ENCODE measurements at regions of chr2 and their contacts with region 1.

Region 1: DNA sequence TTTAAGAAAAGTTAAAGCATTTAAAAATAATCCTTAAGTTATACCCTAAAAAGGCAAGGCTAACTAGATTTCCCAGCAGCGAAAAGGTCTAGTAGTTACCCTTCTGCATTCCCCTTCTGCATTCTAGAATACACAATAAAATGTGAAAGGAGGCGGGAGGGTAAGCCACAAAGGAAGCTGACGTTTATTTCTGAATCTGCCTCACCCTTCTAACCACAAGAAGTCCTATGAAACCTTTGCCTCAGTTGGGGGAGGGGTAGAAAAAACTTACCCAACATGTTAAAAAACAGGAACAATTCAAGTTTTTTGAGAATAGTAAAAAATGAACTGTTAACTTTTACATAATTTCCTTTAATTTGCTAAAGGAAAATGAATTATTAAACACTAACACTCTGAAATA is 11.3 kb downstream of the STK17B start:
- DNase-seq: peak; percentile 69
- H3K4me3 Mint-ChIP-seq: peak overlapping the region; percentile 55
- H3K27ac Mint-ChIP-seq: peak overlapping the region; percentile 87
- H3K4me1 Mint-ChIP-seq: peaks cover 60% of the 10 kb centered on the region
- H3K27me3 Mint-ChIP-seq: no peaks in the 10 kb centered on the region

Region 2: DNA sequence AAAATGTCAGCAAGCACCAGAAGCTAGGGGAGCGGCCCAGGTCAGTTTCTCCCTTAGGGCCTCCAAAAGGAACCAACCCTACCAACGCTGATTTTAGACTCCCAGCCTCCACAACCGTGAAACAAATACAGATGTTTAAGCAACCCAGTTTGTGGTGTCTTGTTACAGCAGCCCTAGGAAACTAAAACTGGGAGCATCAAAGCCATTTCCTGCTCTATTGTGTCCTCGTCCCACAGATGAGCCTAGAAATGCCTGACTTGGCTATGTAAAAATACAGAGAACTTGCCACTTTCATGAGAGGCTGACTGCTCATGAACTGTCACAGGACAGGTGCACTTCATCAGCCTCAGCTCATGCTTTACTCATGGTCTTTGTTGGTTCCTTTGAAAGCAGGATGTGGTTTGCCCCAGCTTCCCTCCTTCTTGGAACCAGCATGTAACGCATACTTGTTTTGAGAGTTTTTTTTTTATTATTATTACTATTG is 600.6 kb before region 1 on chr2:
- intact Hi-C with region 1: loop called (anchors 5 kb)
- DNase-seq: peak; percentile 82
- H3K4me3 Mint-ChIP-seq: peak overlapping the region; percentile 56
- H3K27ac Mint-ChIP-seq: peak overlapping the region; percentile 90
- H3K4me1 Mint-ChIP-seq: peaks cover 57% of the 10 kb centered on the region
- H3K27me3 Mint-ChIP-seq: no peaks in the 10 kb centered on the region

Region 3: GRCh38 chr2:196171248-196171871 is 11.3 kb after region 1 on chr2 and contains the start of gene STK17B:
- intact Hi-C with region 1: loop called (anchors 1 kb)
- DNase-seq: peak; percentile 94
- H3K4me3 Mint-ChIP-seq: peak within 1 kb of the TSS; percentile 96
- H3K27ac Mint-ChIP-seq: peak within 1 kb of the TSS; percentile 93
- H3K4me1 Mint-ChIP-seq: peaks cover 44% of the 10 kb centered on the region
- H3K27me3 Mint-ChIP-seq: no peaks in the 10 kb centered on the region
- total RNA-seq, gene STK17B: 176 and 178 TPM in 2 replicates

Region 4: GRCh38 chr2:196205881-196206435 is 45.9 kb after region 1 on chr2:
- intact Hi-C with region 1: loop called (anchors 1 kb)
- DNase-seq: no peak
- H3K4me3 Mint-ChIP-seq: no peak overlapping the region
- H3K27ac Mint-ChIP-seq: no peak overlapping the region
- H3K4me1 Mint-ChIP-seq: peaks cover 41% of the 10 kb centered on the region
- H3K27me3 Mint-ChIP-seq: no peaks in the 10 kb centered on the region

Region 5: DNA sequence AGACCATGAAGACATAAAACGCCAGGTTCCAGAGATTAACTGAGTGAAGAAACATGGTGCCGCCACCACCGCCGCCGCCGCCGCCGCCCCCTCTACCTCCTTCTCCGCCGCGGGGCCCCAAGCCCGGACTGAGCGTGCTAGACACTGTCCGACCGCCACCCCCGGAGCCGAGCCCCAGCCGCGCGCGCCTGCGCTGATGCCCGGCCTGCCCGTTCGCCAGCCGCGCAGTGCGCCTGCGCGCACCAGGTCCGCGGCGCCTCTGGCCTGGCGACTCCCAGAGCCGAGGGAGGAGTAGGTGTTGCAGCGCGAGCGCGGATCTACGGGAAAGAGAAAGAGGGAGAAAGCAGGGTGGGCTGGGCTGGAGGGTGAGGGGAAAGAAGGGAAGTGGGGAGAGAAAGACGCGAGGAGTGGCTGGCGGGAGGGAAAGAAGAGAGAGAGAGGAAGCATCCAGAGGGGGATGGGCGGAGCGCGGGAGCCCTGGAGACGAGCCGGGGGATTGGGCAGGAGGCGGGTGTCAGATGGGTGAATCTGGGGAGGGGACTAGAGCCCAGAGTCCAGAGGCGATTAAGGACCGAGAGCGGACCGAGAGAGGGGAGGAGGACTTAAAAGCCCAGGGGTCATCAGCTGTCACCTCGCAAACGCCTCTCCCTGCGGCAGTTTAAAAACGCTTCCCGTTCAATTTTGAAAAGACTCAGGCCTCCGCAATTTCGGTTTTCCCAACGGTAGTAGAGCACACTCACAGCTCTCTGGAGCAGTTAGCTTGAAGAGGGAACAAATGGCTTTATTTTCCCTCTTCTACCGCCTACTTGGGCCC is 766.7 kb after region 1 on chr2 and contains the start of gene PGAP1:
- intact Hi-C with region 1: loop called (anchors 10 kb)
- DNase-seq: peak; percentile 84
- H3K4me3 Mint-ChIP-seq: peak within 1 kb of the TSS; percentile 100
- H3K27ac Mint-ChIP-seq: peak within 1 kb of the TSS; percentile 99
- H3K4me1 Mint-ChIP-seq: peaks cover 35% of the 10 kb centered on the region
- H3K27me3 Mint-ChIP-seq: no peaks in the 10 kb centered on the region
- total RNA-seq, gene PGAP1: 31.2 and 31.4 TPM in 2 replicates

Measured in activated T-helper 2 cell treated with anti-CD3 and anti-CD28 coated beads, Interferon-gamma antibody, Interleukin-2, Interleukin-4, amounts not matched to agents 10 μg/mL and 5 μg/mL and 100 μg/mL, durations not matched to agents 14 hours and 24 hours and 36 hours (primary cell).